T-cell (primary cell): ENCODE measurements at regions of chr10 and their contacts with region 1.

Region 1: GRCh38 chr10:93471110-93471651 is 11.0 kb downstream of the MYOF start:
- DNase-seq: no peak
- ATAC-seq: no peak
- H3K4me3 ChIP-seq: no peak overlapping the region
- H3K4me3 Mint-ChIP-seq: no peak overlapping the region
- H3K27ac ChIP-seq: no peak overlapping the region
- H3K27ac Mint-ChIP-seq: no peak overlapping the region
- H3K4me1 ChIP-seq: no peaks in the 10 kb centered on the region
- H3K4me1 Mint-ChIP-seq: no peaks in the 10 kb centered on the region
- H3K27me3 ChIP-seq: no peaks in the 10 kb centered on the region
- H3K27me3 Mint-ChIP-seq: no peaks in the 10 kb centered on the region

Region 2: GRCh38 chr10:93334901-93335327 is 136.3 kb before region 1 on chr10:
- CTCF ChIA-PET with region 1: no interaction called
- POLR2A ChIA-PET with region 1: interaction called in 1 of 2 experiments, 10 read pairs
- DNase-seq: no peak
- ATAC-seq: no peak
- H3K4me3 ChIP-seq: no peak overlapping the region
- H3K4me3 Mint-ChIP-seq: no peak overlapping the region
- H3K27ac ChIP-seq: no peak overlapping the region
- H3K27ac Mint-ChIP-seq: no peak overlapping the region
- H3K4me1 ChIP-seq: no peaks in the 10 kb centered on the region
- H3K4me1 Mint-ChIP-seq: no peaks in the 10 kb centered on the region
- H3K27me3 ChIP-seq: peaks cover 2 to 8% of the 10 kb centered on the region in 2 experiments
- H3K27me3 Mint-ChIP-seq: peaks cover 3 to 4% of the 10 kb centered on the region in 2 donors

Region 3: GRCh38 chr10:94205396-94205831 is 734.2 kb after region 1 on chr10:
- CTCF ChIA-PET with region 1: no interaction called
- POLR2A ChIA-PET with region 1: no interaction called
- DNase-seq: no peak
- ATAC-seq: no peak
- H3K4me3 ChIP-seq: no peak overlapping the region
- H3K4me3 Mint-ChIP-seq: no peak overlapping the region
- H3K27ac ChIP-seq: no peak overlapping the region
- H3K27ac Mint-ChIP-seq: no peak overlapping the region
- H3K4me1 ChIP-seq: peaks cover 0 to 8% of the 10 kb centered on the region in 2 experiments
- H3K4me1 Mint-ChIP-seq: peaks cover 0 to 15% (median 7%) of the 10 kb centered on the region in 3 donors
- H3K27me3 ChIP-seq: peaks cover 0 to 2% of the 10 kb centered on the region in 2 experiments
- H3K27me3 Mint-ChIP-seq: peaks cover 0 to 4% of the 10 kb centered on the region in 2 donors